GM23248 (cell line): ENCODE measurements at regions of chr20 and their contacts with region 1.

Region 1: DNA sequence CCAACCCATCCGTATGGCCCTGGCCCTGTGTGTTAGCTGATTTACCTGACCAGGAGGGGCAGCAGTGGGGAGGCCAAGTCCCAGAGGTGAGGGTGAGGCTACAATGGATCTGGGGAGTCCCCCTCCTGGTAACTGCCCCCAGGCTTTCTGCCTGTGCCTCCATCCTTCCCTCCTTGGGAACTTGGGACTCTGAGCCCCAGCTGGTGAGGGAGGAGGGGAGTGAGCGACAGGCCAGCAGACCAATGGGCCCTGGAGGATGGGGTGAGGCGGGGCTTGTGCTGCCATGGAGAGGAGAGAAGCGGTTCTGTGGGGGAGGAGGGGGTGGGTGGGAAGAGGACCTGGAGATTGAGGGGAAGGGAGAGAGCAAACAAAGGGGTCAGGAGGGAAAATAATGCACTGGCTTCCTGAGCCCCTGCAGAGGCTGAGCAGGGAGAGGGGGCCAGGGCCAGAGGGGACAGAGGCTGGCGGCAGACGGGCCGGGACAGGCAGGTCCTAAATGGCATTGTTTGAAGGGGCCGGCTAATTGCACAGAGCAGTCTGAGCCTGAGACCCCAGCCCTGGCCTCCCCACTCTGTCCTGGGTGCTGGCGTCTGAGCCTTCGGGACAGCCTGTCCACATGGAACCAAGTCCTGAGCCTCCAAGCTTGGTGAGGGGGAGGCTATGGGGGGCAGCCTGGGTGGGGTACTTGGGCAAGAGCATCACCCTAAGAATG is 17.5 kb downstream of the DNMT3B start:
- DNase-seq: no peak
- H3K4me3 ChIP-seq: no peak overlapping the region
- H3K27ac ChIP-seq: no peak overlapping the region
- H3K4me1 ChIP-seq: 0 out of 2 replicates have a peak, but pooled peaks cover 11% of the 10 kb centered on the region
- H3K27me3 ChIP-seq: no peaks in the 10 kb centered on the region

Region 2: GRCh38 chr20:32678948-32679347 is 100.7 kb before region 1 on chr20:
- in situ Hi-C with region 1: loop called (anchors 5 kb)
- DNase-seq: peak; percentile 74
- H3K4me3 ChIP-seq: no peak overlapping the region
- H3K27ac ChIP-seq: no peak overlapping the region
- H3K4me1 ChIP-seq: no peaks in the 10 kb centered on the region
- H3K27me3 ChIP-seq: no peaks in the 10 kb centered on the region

Region 3: DNA sequence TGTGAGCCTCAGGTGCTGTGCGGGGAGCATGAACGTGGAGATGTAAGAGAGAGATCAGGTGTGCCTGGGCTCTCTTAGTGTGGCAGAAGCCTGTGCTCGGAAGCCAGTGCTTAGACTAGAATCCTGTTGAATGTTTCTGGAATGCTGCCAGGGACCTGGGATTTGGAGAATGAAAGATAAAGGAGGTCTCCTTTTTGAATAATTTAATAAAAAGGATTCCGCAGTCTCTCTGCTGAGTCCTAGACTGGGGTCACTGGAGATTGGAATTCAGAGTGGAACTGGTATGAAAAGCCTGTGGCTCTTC is 60.3 kb after region 1 on chr20:
- in situ Hi-C with region 1: no loop called
- DNase-seq: no peak
- H3K4me3 ChIP-seq: no peak overlapping the region
- H3K27ac ChIP-seq: no peak overlapping the region
- H3K4me1 ChIP-seq: no peaks in the 10 kb centered on the region
- H3K27me3 ChIP-seq: no peaks in the 10 kb centered on the region

Region 4: GRCh38 chr20:33443512-33444239 is 664.0 kb after region 1 on chr20 and contains the start of gene SNTA1:
- in situ Hi-C with region 1: no loop called
- DNase-seq: peak; percentile 87
- H3K4me3 ChIP-seq: peak within 1 kb of the TSS; percentile 81
- H3K27ac ChIP-seq: no peak within 1 kb of the TSS
- H3K4me1 ChIP-seq: no peaks in the 10 kb centered on the region
- H3K27me3 ChIP-seq: no peaks in the 10 kb centered on the region
- total RNA-seq, gene SNTA1: 24.2 and 24.5 TPM in 2 replicates